ENCODE measurements at regions of chr10 and their contacts with region 1.

Region 1: DNA sequence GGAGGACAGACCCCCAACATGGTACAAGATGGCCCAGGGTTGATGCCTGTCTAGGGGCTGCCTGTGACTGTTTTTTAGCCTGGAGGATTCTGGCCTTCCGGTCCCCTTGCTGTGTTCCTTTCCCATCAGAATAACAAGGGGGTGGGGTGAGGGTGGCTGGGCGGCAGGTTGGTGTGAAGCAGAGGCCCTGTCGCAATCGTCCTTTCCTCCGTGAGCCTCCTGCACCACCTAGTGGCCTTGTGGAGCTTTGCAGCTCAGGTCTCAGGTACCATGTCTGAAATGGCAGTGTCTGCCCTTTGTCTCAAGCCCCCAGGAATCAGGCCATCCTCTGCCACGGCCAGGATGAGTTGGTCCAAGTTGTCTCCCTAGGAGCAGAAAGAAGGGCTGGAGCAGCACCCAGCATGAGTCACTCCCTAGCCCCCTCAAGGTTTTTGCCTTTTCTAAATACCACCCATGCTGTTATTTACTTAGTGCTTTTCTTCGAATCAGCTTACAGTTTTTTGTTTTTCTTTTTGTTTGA is 24.2 kb downstream of the TACR2 start:
- DNase-seq: peak; percentile 90
- H3K4me3 ChIP-seq: no peak overlapping the region
- H3K27ac ChIP-seq: peak overlapping the region; percentile 45 to 60
- H3K4me1 ChIP-seq: peaks cover 5% of the 10 kb centered on the region
- H3K27me3 ChIP-seq: no peaks in the 10 kb centered on the region
- CTCF ChIP-seq: peak; percentile 81 to 99 (median 98)
- POLR2A ChIP-seq: no peak

Region 2: DNA sequence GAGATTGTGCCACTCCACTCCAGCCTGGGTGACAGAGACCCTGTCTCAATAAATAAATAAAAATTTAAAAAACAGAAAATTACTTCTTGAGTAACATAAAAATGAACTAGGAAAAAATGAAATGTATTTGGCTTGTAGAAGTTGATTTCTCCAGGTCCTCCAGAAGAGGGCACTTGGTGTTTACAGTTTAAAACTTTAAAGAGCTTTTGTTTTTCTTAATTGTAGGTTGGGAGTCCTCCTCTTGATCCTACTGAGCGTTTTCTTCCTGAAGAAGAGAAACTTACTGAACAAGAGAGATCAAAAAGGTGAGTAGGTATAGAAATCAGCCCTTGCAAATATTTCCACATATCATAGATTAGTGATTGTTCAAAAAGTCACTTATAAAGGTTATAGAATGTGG is 387.7 kb before region 1 on chr10:
- intact Hi-C with region 1: loop called (anchors 10 kb)
- DNase-seq: no peak
- H3K4me3 ChIP-seq: no peak overlapping the region
- H3K27ac ChIP-seq: no peak overlapping the region
- H3K4me1 ChIP-seq: no peaks in the 10 kb centered on the region
- H3K27me3 ChIP-seq: no peaks in the 10 kb centered on the region
- CTCF ChIP-seq: peak in 3 of 4 experiments; percentile 23 to 55 (median 48)
- POLR2A ChIP-seq: no peak

Region 3: DNA sequence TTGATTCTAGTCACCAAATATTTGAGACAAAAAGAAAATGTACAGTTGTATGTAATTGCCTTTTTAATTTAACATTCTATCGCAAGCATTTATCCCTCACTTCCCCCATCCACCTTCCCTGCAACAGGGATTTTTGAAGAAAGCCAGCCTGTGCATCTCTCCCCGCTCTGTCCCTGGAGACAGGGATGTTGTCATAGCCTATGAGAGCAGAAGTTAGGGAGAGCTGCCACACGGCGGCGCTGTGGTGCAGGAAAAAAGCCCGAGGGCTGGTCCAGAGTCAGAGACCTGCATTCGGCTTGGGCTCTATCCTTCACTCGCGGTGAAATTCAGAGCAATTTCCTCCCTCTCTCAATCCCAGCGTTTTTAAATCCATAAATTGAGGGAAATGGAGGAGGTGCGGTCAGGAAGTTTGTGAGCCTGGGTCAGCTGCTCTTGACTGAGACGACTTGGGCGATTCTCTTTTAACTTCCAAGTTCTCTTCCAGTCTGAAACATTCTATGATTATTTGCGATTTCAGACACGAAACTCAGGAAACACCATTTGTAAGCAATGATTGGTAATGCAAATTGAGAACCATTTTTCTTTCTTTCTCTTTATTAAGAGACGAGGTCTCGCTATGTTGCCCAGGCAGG is 154.9 kb before region 1 on chr10:
- intact Hi-C with region 1: loop called (anchors 1 kb)
- DNase-seq: peak; percentile 79
- H3K4me3 ChIP-seq: no peak overlapping the region
- H3K27ac ChIP-seq: no peak overlapping the region
- H3K4me1 ChIP-seq: no peaks in the 10 kb centered on the region
- H3K27me3 ChIP-seq: no peaks in the 10 kb centered on the region
- CTCF ChIP-seq: peak; percentile 76 to 97 (median 95)
- POLR2A ChIP-seq: no peak

Region 4: DNA sequence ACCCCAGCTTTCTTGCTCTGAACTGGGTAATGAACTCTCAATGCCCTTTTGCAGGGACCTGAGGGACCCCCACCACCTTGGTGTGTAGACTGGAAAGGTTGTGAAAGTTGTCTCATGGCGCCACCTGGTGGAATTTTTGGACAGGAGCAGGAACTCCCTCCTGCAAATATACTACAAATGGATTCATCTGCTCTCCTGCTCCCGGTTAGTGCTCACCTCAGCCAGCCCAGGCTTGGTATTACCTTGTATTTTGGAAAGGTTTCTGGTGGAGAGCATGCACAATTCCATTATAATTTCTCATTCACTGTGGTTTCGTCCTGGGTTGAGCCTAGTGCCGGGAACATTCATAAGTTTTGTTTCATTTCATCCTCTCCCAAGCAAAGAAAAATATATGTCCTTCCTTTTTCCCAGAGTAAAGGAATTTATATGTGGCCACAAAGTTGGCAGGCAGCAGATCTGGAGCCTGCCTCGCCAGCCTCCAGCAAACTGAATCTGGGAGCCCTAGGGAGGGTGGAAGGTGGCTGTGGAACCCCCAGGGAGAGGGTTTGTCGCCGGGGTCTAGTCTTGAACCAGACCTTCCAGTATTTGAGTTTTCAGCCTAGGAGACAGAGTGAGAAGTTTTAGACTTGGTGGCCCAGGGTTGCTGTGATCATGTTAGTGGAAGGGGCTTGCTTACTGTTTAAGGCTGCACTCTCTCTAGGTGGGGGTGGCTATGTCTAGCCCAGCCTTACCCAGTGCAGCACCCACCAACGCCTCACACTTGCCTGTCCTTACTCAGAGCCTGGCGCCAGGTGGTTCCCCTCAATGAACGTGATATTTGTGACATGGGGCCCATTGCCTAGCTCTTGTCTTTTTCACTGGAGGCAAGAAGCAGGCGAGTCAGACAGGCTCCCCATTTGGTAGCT is 247.0 kb after region 1 on chr10:
- intact Hi-C with region 1: no loop called
- DNase-seq: peak; percentile 69
- H3K4me3 ChIP-seq: no peak overlapping the region
- H3K27ac ChIP-seq: no peak overlapping the region
- H3K4me1 ChIP-seq: peaks cover 2% of the 10 kb centered on the region
- H3K27me3 ChIP-seq: no peaks in the 10 kb centered on the region
- CTCF ChIP-seq: peak; percentile 79 to 89 (median 87)
- POLR2A ChIP-seq: no peak